CD4-positive, alpha-beta T cell (primary cell): ENCODE measurements at regions of chrX and their contacts with region 1.

Region 1: GRCh38 chrX:49100704-49101628 is 21.3 kb upstream of the WDR45 start:
- DNase-seq: peak; percentile 75 to 95 (median 84)
- ATAC-seq: peak; percentile 90
- H3K4me3 ChIP-seq: peak overlapping the region; percentile 66
- H3K4me3 Mint-ChIP-seq: peak overlapping the region; percentile 94
- H3K27ac ChIP-seq: peak overlapping the region; percentile 75 to 81
- H3K27ac Mint-ChIP-seq: peak overlapping the region; percentile 87
- H3K4me1 ChIP-seq: peaks cover 17% of the 10 kb centered on the region
- H3K4me1 Mint-ChIP-seq: peaks cover 11% of the 10 kb centered on the region
- H3K27me3 ChIP-seq: no peaks in the 10 kb centered on the region
- H3K27me3 Mint-ChIP-seq: no peaks in the 10 kb centered on the region
- CTCF ChIP-seq: no peak

Region 2: DNA sequence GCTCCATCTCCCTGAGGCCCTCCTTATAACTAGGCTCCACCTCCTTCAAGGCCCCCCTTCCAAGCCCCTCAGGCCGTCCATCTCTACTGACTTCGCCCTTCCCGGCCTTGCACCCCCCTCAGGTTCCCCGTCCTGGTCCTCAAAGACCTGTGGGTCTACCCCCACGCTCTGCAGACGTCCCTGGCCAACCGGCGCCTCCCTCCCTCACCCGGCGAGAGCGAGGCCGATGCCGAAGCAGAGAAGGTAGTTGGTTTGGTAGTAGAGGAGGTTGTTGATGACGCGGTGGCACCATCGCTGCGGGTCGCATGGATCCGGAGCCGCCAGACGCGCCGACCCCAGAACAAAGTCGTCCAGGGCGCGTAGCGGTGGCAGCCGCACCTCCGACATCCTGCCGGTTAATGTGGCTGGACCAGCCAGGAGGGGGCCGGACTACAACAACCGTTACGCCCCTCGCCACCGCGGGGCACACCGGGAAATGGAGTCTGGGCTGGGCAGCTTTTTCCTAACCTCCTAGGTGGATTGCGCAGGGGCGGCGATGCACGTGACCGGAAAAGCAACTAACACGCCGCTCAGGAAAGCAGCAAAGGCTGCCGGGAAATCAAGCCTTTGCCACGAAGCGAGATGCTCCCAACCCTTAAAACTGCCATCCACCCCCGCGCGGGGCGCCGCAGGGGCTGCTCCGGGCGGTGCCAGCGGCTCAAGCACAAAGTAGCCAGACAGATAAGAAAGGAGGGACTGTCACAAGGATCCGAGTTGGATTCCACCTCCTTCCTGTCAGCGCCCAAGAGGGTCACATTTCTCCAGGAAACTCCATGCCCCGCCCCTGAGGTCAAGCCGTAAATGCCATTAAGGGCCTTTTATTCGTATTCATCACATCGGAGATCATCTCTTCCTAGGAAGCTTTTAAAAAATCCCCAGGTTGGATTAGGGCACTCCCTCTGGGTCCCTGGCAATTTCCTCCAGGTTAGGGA is 27.1 kb before region 1 on chrX and contains the start of gene PRAF2:
- CTCF ChIA-PET with region 1: no interaction called
- POLR2A ChIA-PET with region 1: no interaction called
- intact Hi-C with region 1: loop called in 1 of 2 experiments (anchors 2 kb)
- DNase-seq: peak; percentile 75 to 95 (median 88)
- ATAC-seq: peak; percentile 98
- H3K4me3 ChIP-seq: peak within 1 kb of the TSS; percentile 72
- H3K4me3 Mint-ChIP-seq: peak within 1 kb of the TSS; percentile 84
- H3K27ac ChIP-seq: peak within 1 kb of the TSS; percentile 60 to 66
- H3K27ac Mint-ChIP-seq: peak within 1 kb of the TSS; percentile 91
- H3K4me1 ChIP-seq: peaks cover 25% of the 10 kb centered on the region
- H3K4me1 Mint-ChIP-seq: peaks cover 20% of the 10 kb centered on the region
- H3K27me3 ChIP-seq: no peaks in the 10 kb centered on the region
- H3K27me3 Mint-ChIP-seq: no peaks in the 10 kb centered on the region
- CTCF ChIP-seq: no peak
- total RNA-seq, gene PRAF2: 17.1 to 21.0 TPM